CD4-positive, alpha-beta T cell (primary cell): ENCODE measurements at regions of chr7 and their contacts with region 1.

Region 1: DNA sequence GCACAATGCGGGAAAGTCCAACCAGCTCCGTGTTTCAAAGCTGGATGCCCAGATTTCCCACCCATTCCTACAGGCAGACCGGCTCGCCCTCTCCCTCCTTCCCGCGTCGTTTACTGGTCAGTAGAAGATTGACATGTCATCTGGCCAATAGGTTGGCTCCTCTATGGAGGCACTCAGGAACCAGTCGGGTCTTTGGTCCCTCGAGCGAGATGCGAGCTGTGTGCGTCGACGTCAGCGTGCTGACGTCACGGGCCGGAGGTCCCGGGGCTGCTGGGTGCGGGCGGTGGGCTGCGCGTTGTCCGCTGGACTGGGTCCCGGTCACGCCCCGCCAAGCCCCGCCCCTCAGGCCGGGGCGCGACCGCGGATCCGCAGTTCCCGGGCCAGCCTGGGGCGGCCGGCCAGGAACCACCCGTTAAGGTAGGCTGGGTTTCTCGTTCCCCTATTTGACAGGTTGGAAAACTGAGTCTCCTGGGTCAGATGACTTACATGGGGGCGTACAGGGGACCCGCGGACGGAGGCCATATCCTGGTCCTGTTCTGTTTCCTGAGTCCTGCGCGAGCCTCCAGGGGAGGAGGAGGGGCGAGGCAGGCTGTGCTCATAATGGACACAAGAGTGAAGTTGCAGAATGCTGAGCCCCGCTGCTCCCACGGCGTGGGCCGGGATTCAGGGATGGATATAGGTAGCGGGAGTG is at the start of gene STARD3NL:
- DNase-seq: peak; percentile 69 to 98 (median 84)
- ATAC-seq: peak; percentile 94
- H3K4me3 ChIP-seq: peak within 1 kb of the TSS; percentile 88
- H3K4me3 Mint-ChIP-seq: peak within 1 kb of the TSS; percentile 98
- H3K27ac ChIP-seq: peak within 1 kb of the TSS; percentile 82 to 85
- H3K27ac Mint-ChIP-seq: peak within 1 kb of the TSS; percentile 91
- H3K4me1 ChIP-seq: peaks cover 4% of the 10 kb centered on the region
- H3K4me1 Mint-ChIP-seq: peaks cover 40% of the 10 kb centered on the region
- H3K27me3 ChIP-seq: no peaks in the 10 kb centered on the region
- H3K27me3 Mint-ChIP-seq: peaks cover 14% of the 10 kb centered on the region
- CTCF ChIP-seq: no peak
- total RNA-seq, gene STARD3NL: 14.4 to 15.7 TPM

Region 2: DNA sequence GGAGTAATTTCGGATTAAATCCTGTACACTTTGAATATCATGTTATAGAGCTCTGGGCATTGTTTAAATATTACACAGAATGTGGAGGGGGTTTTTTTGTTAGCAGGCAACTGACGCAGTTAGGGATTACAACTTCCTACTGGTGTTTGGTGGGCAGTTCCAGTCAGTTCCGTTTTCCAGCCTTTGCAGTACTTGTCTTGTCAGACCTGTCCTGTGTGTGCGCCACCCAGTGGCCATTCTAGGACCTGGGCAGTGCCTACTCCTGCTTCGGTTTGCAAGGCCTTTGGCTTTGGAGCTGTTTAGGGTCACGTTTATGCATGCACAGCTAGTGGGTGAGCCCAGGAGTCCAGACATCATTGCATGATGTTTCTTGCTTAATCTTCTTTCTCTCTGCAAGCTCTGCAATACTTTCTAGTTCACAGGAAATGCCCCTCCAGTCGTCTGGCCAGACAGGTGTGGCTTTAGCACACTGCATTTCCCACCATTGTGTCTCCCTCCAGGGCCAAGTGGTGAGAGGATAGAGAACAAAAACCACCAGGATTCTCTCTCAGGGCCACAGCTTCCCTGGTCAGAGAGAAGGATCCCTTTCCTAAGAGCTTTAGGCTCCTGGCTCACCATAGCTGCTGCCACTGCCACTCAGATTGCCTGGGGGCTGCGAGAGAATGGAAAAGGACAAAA is 191.8 kb after region 1 on chr7:
- CTCF ChIA-PET with region 1: interaction called, 11 read pairs
- POLR2A ChIA-PET with region 1: interaction called, 3 read pairs
- intact Hi-C with region 1: no loop called
- DNase-seq: peak; percentile 53 to 89 (median 76)
- ATAC-seq: peak; percentile 60
- H3K4me3 ChIP-seq: no peak overlapping the region
- H3K4me3 Mint-ChIP-seq: peak overlapping the region; percentile 59
- H3K27ac ChIP-seq: peak overlapping the region in 1 of 2 donors; percentile 52
- H3K27ac Mint-ChIP-seq: peak overlapping the region; percentile 85
- H3K4me1 ChIP-seq: peaks cover 41% of the 10 kb centered on the region
- H3K4me1 Mint-ChIP-seq: peaks cover 72% of the 10 kb centered on the region
- H3K27me3 ChIP-seq: no peaks in the 10 kb centered on the region
- H3K27me3 Mint-ChIP-seq: no peaks in the 10 kb centered on the region
- CTCF ChIP-seq: peak; percentile 85